ENCODE measurements at regions of chr3 and their contacts with region 1.

Region 1: DNA sequence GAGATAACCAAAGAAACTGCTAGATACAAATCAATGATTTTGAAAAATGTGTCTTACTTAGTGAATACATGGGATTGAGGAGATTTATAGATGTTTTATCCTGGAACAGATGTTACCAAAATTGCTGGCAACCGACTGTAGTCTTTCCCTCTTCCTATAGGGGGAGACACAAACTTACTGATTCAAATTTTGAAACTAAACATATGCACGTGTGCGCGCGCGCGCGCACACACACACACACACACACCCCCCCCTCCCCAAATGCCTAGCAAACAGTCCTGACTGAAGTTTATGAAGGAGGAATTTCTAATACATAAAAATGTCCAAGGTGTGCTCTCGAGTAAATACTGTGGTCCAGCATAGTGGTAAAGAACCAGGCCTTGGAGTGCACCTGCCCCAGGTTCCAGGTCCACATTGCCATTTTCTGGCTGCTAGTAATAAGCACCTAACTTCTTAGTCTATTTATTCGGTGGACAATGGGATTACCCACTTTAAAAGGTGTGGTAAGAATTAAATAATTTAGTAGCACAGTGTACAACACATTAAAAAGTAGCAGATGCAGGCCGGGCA is 18.5 kb upstream of the C3orf62 start:
- DNase-seq: peak in 1 of 10 donors; percentile 63

Region 2: GRCh38 chr3:49454458-49454857 is 158.9 kb after region 1 on chr3:
- intact Hi-C with region 1: loop called (anchors 1 kb)
- DNase-seq: no peak

Measured in posterior cingulate gyrus (tissue), 11 donors.